ENCODE measurements at regions of chr14 and their contacts with region 1.

Region 1: DNA sequence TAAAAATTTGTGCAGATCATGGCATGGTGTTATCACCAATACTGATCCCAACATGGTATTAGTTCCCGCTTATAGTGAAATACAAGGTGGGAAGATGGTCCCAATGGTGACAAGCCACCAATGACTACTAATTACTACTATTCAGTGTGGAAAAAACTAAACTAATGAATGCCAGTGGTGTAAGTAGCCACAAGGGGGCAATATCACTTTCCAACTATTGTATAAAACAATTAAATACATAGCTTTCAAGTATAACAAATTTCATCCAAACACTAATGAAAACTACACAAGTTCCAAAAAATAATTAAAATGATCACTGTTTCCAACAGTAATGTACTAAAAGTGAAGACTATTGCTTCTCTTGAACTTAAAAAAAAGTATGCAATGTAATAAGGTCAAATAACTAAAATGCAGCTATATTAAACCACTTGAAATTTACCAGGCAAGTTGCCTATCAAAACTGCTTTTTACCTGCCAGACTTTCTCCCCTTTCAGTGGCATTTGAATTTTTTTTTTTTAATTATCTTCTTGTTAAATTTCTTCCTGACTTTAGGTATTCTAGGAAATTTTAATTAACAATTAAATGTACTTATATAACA is 58.0 kb downstream of the PAPLN start:
- DNase-seq: peak; percentile 61

Region 2: DNA sequence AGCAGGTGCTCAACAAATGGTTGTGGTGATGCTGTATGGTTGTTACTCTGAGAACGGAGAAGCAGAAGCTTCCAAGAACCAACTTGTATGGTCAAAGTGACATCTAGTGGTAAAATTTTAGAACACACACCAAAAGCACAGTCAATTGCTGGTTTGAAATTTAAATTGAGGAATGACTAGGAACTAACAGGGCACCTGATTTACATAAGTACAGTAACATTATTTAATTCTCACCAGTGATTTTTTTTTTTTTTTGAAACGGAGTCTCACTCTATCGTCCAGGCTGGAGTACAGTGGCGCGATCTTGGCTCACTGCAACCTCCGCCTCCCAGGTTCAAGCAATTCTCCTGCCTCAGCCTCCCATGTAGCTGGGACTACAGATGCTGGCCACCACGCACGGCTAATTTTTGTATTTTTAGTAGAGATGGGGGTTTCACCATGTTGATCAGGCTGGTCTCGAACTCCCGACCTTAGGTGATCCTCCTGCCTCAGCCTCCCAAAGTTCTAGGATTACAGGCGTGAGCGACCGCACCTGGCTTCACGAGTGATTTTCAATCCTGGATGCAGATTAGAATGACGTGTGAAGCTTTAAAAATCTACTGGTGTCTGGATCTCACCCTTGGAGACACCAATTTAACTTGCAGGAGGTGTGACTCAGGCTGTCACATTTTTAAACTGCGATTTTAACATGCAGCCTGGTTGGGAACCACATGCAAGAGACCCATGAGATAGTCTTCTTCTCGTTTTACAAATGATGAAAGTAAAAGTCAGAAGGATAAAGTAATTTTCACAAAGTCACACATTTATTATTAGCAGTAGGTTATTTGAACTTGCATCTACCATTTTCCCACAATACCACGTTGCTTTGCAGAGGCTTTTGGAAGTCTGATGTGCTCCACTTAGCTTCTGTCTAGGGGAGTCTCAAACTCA is 177.2 kb after region 1 on chr14:
- in situ Hi-C with region 1: loop called (anchors 10 kb)
- DNase-seq: peak; percentile 80

Region 3: GRCh38 chr14:73491256-73492042 is 196.2 kb after region 1 on chr14:
- in situ Hi-C with region 1: no loop called
- DNase-seq: peak; percentile 62

Region 4: DNA sequence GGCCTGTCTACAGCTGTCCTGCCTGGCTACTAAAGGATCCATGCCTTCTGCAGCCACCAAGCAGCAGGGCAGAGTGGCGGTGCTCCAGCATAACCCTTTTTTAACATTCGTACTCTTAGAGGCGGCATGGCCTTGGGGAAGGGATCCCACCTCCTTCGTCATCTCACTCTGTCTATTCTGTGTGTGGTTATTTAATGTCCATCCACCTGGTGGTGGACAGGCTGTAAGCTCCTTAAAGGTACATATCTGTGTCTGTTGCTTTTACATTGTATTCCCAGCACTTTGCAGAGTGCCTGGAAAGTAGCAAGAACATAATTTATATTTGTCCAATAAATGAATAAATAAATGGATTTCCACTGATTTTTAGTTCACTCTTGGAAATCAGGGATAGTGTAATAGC is 225.9 kb after region 1 on chr14:
- in situ Hi-C with region 1: no loop called
- DNase-seq: no peak